AG04450 (cell line): ENCODE measurements at regions of chr16 and their contacts with region 1.

Region 1: GRCh38 chr16:28218104-28218503 is 6.3 kb upstream of the XPO6 start:
- DNase-seq: peak; percentile 18
- H3K4me3 ChIP-seq: no peak overlapping the region
- H3K27ac ChIP-seq: no peak overlapping the region
- H3K27me3 ChIP-seq: no peaks in the 10 kb centered on the region
- CTCF ChIP-seq: peak; percentile 68

Region 2: DNA sequence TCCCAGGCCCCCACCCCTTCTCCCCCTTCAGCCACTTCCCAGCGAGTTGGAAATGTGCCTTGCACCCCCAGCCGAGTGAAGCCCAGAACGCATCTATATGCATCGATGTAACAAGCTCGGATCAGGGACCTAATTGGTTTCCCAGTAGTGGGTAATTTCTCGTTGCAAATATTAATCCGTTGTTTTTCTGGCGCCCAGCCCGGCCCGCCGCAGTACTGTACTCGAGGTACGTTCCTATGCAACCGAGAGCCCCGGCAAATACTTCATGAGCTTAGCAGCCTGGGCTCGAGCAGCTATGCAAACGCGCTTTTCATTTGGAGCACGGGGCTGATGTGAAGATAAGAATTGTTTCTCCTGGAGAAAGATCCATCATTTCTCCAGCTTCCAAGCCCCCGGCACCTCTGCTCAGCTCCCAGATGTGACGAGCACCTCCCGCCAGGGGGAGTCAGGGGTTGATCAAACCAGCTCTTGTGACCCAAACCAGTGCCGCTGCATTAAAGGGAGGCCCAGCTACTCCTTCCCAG is 438.4 kb before region 1 on chr16:
- CTCF ChIA-PET with region 1: interaction called, 13 read pairs
- POLR2A ChIA-PET with region 1: no interaction called
- DNase-seq: no peak
- H3K4me3 ChIP-seq: no peak overlapping the region
- H3K27ac ChIP-seq: no peak overlapping the region
- H3K27me3 ChIP-seq: no peaks in the 10 kb centered on the region
- CTCF ChIP-seq: peak; percentile 75

Region 3: DNA sequence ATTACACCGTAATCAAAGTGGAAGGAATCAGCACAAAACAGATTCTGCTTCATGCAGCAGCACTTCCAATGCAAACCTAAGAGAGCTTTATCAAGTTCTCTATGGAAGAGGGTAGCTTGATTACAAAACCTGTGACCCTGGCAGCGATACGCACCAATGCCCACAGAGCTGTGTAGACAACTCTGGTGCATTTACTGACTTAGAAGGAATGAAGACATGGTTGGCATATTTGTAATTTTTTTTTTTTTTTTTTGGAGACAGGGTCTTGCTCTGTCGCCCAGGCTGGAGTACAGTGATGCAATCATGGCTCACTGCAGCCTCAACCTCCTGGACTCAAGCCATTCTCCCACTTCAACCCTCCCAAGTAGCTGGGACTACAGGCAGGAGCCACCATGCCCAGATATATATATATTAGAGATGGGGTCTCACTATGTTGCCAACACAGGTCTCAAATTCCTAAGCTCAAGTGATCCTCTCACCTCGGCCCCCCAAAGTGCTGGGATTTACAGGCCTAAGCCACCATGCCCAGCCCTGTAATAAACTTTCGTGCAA is 55.7 kb before region 1 on chr16:
- CTCF ChIA-PET with region 1: no interaction called
- POLR2A ChIA-PET with region 1: interaction called, 10 read pairs
- DNase-seq: no peak
- H3K4me3 ChIP-seq: no peak overlapping the region
- H3K27ac ChIP-seq: no peak overlapping the region
- H3K27me3 ChIP-seq: no peaks in the 10 kb centered on the region
- CTCF ChIP-seq: no peak

Region 4: DNA sequence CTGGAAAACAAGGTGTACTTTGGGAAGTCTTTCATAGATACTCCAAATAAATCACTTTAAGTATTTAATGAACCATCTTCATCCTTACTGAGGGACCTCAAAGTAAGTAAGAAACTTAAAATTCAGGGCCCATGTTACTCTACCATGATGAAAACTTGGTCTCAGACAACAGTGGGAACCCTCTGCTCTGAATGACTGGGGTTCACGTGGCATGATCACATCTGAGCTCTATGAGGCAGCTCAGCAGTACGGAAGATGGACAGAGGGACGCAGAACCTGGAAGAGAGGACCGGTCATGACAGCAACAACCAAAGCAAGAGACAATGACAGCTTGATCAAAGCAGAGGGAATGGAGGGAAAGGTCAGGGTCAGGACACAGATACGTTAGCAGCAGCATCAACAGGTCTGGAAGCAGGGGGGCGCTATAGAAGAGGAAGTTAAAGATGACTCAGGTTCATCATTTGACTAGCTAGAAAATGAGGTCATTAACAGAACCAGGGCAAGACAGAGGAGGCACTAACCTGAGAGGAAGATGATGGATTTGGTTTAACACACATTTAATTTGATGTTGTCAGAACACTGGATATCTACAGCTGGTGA is 15.9 kb before region 1 on chr16:
- CTCF ChIA-PET with region 1: no interaction called
- POLR2A ChIA-PET with region 1: no interaction called
- DNase-seq: no peak
- H3K4me3 ChIP-seq: no peak overlapping the region
- H3K27ac ChIP-seq: no peak overlapping the region
- H3K27me3 ChIP-seq: no peaks in the 10 kb centered on the region
- CTCF ChIP-seq: 0 out of 2 replicates have a peak, but pooled peaks have one; percentile 1